ENCODE measurements at regions of chr9 and their contacts with region 1.

Region 1: GRCh38 chr9:88388172-88388885 is at the start of gene SPIN1:
- DNase-seq: peak; percentile 76
- ATAC-seq: peak; percentile 86
- H3K4me3 ChIP-seq: peak within 1 kb of the TSS; percentile 98
- H3K27ac ChIP-seq: peak within 1 kb of the TSS; percentile 84
- H3K4me1 ChIP-seq: peaks cover 11% of the 10 kb centered on the region
- H3K27me3 ChIP-seq: no peaks in the 10 kb centered on the region
- CTCF ChIP-seq: no peak
- total RNA-seq, gene SPIN1: 37.9 and 46.2 TPM in 2 replicates

Region 2: DNA sequence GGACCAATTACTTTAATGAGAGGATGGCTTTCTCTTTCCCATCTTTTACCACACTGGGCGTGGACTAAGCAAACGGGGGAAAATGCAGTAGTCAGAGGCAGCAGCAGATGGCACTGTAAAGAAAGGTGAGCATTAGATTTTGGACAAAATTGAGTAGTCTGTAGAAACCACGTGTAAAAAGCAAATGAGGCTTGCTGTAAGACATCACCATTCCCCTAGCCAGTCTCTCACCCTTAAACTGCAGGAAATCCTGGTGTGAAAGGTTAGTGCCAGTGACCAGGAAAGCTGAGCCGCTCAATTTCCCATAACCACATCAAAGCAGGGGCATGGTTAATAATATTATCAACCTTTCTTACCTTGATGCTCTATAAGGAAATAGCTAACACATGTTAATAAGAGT is 281.8 kb before region 1 on chr9:
- CTCF ChIA-PET with region 1: no interaction called
- POLR2A ChIA-PET with region 1: no interaction called
- intact Hi-C with region 1: loop called (anchors 10 kb)
- DNase-seq: peak; percentile 49
- ATAC-seq: peak; percentile 64
- H3K4me3 ChIP-seq: no peak overlapping the region
- H3K27ac ChIP-seq: no peak overlapping the region
- H3K4me1 ChIP-seq: no peaks in the 10 kb centered on the region
- H3K27me3 ChIP-seq: no peaks in the 10 kb centered on the region
- CTCF ChIP-seq: peak; percentile 63

Region 3: DNA sequence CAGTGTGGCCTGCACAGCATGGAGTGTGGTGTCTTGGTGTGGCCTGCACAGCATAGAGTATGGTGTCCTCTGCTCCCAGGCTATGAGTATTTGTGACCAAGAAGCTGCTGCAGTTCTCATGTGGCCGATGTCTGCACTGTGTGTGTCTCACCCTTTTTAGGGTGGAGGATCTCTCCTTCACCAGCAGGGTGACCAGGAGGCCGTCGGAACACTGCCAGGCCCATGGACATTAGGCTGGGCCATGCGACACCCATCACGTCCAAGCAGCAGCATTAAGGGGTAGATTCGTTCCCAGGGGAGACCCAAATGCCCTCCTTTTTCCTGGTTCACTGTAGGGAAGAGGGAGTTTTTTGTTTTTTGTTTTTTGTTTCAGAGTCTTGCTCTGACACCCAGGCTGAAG is 115.3 kb before region 1 on chr9:
- CTCF ChIA-PET with region 1: no interaction called
- POLR2A ChIA-PET with region 1: interaction called, 13 read pairs
- intact Hi-C with region 1: loop called (anchors 5 kb)
- DNase-seq: no peak
- ATAC-seq: no peak
- H3K4me3 ChIP-seq: no peak overlapping the region
- H3K27ac ChIP-seq: no peak overlapping the region
- H3K4me1 ChIP-seq: peaks cover 22% of the 10 kb centered on the region
- H3K27me3 ChIP-seq: no peaks in the 10 kb centered on the region
- CTCF ChIP-seq: no peak

Region 4: GRCh38 chr9:88418715-88419540 is 30.6 kb after region 1 on chr9:
- CTCF ChIA-PET with region 1: no interaction called
- POLR2A ChIA-PET with region 1: no interaction called
- intact Hi-C with region 1: no loop called
- DNase-seq: no peak
- ATAC-seq: no peak
- H3K4me3 ChIP-seq: no peak overlapping the region; the same call in 1 of the 2 replicates
- H3K27ac ChIP-seq: no peak overlapping the region
- H3K4me1 ChIP-seq: no peaks in the 10 kb centered on the region
- H3K27me3 ChIP-seq: no peaks in the 10 kb centered on the region
- CTCF ChIP-seq: no peak

Region 5: GRCh38 chr9:88476491-88477271 is 88.4 kb after region 1 on chr9:
- CTCF ChIA-PET with region 1: no interaction called
- POLR2A ChIA-PET with region 1: no interaction called
- intact Hi-C with region 1: loop called (anchors 5 kb)
- DNase-seq: peak; percentile 6
- ATAC-seq: no peak; the same call in 1 of the 2 replicates
- H3K4me3 ChIP-seq: peak overlapping the region; percentile 27; the same call in 1 of the 2 replicates
- H3K27ac ChIP-seq: peak overlapping the region; percentile 95
- H3K4me1 ChIP-seq: peaks cover 52% of the 10 kb centered on the region
- H3K27me3 ChIP-seq: no peaks in the 10 kb centered on the region
- CTCF ChIP-seq: no peak

Region 6: GRCh38 chr9:88534456-88535261 is 146.3 kb after region 1 on chr9 and contains the start of gene NXNL2:
- CTCF ChIA-PET with region 1: no interaction called
- POLR2A ChIA-PET with region 1: interaction called, 10 read pairs
- intact Hi-C with region 1: loop called (anchors 5 kb)
- DNase-seq: peak; percentile 76
- ATAC-seq: peak; percentile 63
- H3K4me3 ChIP-seq: peak within 1 kb of the TSS; percentile 88
- H3K27ac ChIP-seq: peak within 1 kb of the TSS; percentile 81
- H3K4me1 ChIP-seq: peaks cover 21% of the 10 kb centered on the region
- H3K27me3 ChIP-seq: no peaks in the 10 kb centered on the region
- CTCF ChIP-seq: no peak
- total RNA-seq, gene NXNL2: 0.66 TPM in 1 of 2 replicates, not detected in the other

Region 7: GRCh38 chr9:88578121-88579054 is 190.1 kb after region 1 on chr9:
- CTCF ChIA-PET with region 1: no interaction called
- POLR2A ChIA-PET with region 1: no interaction called
- intact Hi-C with region 1: no loop called
- DNase-seq: peak; percentile 81
- ATAC-seq: peak; percentile 95
- H3K4me3 ChIP-seq: peak overlapping the region; percentile 13; the same call in 1 of the 2 replicates
- H3K27ac ChIP-seq: no peak overlapping the region
- H3K4me1 ChIP-seq: 0 out of 2 replicates have a peak, but pooled peaks cover 3% of the 10 kb centered on the region
- H3K27me3 ChIP-seq: no peaks in the 10 kb centered on the region
- CTCF ChIP-seq: peak; percentile 87

Measured in PC-3 (cell line).